Ovary (tissue), 10 donors: ENCODE measurements at regions of chr5 and their contacts with region 1.

Region 1: GRCh38 chr5:163408311-163408923 is 29.0 kb upstream of the CCNG1 start:
- DNase-seq: peak; percentile 58 to 76 (median 69)
- H3K4me3 ChIP-seq: no peak overlapping the region
- H3K27ac ChIP-seq: no peak overlapping the region
- H3K4me1 ChIP-seq: no peaks in the 10 kb centered on the region
- H3K27me3 ChIP-seq: no peaks in the 10 kb centered on the region
- CTCF ChIP-seq: peak; percentile 68 to 85 (median 74)
- EP300 ChIP-seq: no peak
- POLR2A ChIP-seq: no peak

Region 2: GRCh38 chr5:162837155-162837554 is 571.3 kb before region 1 on chr5:
- intact Hi-C with region 1: loop called in 1 of 4 experiments (anchors 5 kb)
- DNase-seq: no peak
- H3K4me3 ChIP-seq: no peak overlapping the region
- H3K27ac ChIP-seq: no peak overlapping the region
- H3K4me1 ChIP-seq: no peaks in the 10 kb centered on the region
- H3K27me3 ChIP-seq: no peaks in the 10 kb centered on the region
- CTCF ChIP-seq: no peak
- EP300 ChIP-seq: no peak
- POLR2A ChIP-seq: no peak

Region 3: GRCh38 chr5:164038128-164038783 is 629.8 kb after region 1 on chr5:
- intact Hi-C with region 1: no loop called
- DNase-seq: no peak
- H3K4me3 ChIP-seq: no peak overlapping the region
- H3K27ac ChIP-seq: no peak overlapping the region
- H3K4me1 ChIP-seq: no peaks in the 10 kb centered on the region
- H3K27me3 ChIP-seq: no peaks in the 10 kb centered on the region
- CTCF ChIP-seq: no peak
- EP300 ChIP-seq: no peak
- POLR2A ChIP-seq: no peak